Endothelial cell of umbilical vein (primary cell): ENCODE measurements at regions of chr5 and their contacts with region 1.

Region 1: GRCh38 chr5:171484460-171484899 is 65.0 kb downstream of the FGF18 start:
- DNase-seq: peak; percentile 33
- H3K4me3 ChIP-seq: no peak overlapping the region
- H3K27ac ChIP-seq: no peak overlapping the region
- H3K4me1 ChIP-seq: no peaks in the 10 kb centered on the region
- H3K27me3 ChIP-seq: peaks cover 0 to 2% of the 10 kb centered on the region in 2 experiments
- CTCF ChIP-seq: peak; percentile 71 to 83
- POLR2A ChIP-seq: no peak

Region 2: DNA sequence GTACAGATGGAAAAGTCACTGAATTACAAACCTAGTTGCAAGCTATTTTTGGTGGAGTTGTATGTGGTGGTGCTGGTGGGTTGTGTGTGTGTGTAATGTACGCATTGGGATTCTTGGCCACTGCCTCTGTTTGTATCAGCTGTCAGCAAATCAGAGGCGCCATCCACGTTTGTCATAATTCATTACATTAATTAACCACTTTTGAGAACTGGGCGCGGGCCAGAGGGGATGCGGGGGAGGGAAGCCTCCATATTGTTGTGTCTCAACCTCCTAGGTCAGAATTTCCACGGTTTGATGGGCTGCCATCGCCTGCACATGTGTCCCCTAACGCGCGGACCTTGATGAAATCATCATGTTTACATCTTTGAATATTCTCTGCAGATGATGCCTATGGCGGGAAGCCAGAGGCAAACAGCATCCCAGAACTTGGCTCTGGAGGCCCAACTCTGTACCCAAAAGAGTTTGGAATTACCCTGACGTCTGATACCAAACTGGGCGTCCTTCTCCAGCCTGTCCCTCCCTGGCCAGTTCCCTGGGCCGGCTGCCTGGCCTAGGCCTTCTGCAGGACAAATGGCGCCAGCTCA is 10.2 kb before region 1 on chr5:
- CTCF ChIA-PET with region 1: interaction called, 16 read pairs
- POLR2A ChIA-PET with region 1: no interaction called
- dilution Hi-C with region 1: no loop called
- intact Hi-C with region 1: no loop called
- DNase-seq: no peak
- H3K4me3 ChIP-seq: no peak overlapping the region
- H3K27ac ChIP-seq: no peak overlapping the region
- H3K4me1 ChIP-seq: no peaks in the 10 kb centered on the region
- H3K27me3 ChIP-seq: peaks cover 14 to 16% of the 10 kb centered on the region in 2 experiments
- CTCF ChIP-seq: no peak
- POLR2A ChIP-seq: no peak

Region 3: DNA sequence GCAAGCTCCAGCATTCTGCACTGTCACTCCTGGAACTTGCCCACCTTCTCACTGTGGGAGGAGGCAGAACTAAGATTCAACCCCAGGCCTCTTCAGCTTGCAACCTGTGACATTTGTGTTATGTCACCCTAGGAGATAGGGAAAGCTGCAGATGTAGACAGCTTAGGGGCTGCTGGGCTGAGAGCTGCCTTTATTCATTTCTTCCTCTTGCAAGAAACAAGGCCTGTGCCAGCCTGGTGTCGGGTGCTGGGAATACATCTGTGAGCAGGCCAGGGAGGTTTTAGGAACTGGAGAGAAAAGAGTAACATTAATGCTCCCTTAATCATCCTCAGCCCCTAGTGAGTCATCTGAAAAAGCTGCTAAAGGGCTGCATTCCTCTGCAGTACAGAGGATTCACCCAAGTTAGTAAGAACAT is 36.7 kb after region 1 on chr5:
- CTCF ChIA-PET with region 1: interaction called, 9 read pairs
- POLR2A ChIA-PET with region 1: no interaction called
- dilution Hi-C with region 1: no loop called
- intact Hi-C with region 1: loop called (anchors 1 kb)
- DNase-seq: peak; percentile 32
- H3K4me3 ChIP-seq: no peak overlapping the region
- H3K27ac ChIP-seq: no peak overlapping the region
- H3K4me1 ChIP-seq: peaks cover 13% of the 10 kb centered on the region
- H3K27me3 ChIP-seq: peaks cover 0 to 2% of the 10 kb centered on the region in 2 experiments
- CTCF ChIP-seq: no peak
- POLR2A ChIP-seq: no peak

Region 4: GRCh38 chr5:171606414-171607024 is 122.0 kb after region 1 on chr5:
- CTCF ChIA-PET with region 1: interaction called, 4 read pairs
- POLR2A ChIA-PET with region 1: no interaction called
- dilution Hi-C with region 1: no loop called
- intact Hi-C with region 1: loop called (anchors 1 kb)
- DNase-seq: no peak
- H3K4me3 ChIP-seq: no peak overlapping the region
- H3K27ac ChIP-seq: no peak overlapping the region
- H3K4me1 ChIP-seq: peaks cover under 1% of the 10 kb centered on the region
- H3K27me3 ChIP-seq: peaks cover 5 to 6% of the 10 kb centered on the region in 2 experiments
- CTCF ChIP-seq: peak; percentile 34 to 37
- POLR2A ChIP-seq: no peak

Region 5: DNA sequence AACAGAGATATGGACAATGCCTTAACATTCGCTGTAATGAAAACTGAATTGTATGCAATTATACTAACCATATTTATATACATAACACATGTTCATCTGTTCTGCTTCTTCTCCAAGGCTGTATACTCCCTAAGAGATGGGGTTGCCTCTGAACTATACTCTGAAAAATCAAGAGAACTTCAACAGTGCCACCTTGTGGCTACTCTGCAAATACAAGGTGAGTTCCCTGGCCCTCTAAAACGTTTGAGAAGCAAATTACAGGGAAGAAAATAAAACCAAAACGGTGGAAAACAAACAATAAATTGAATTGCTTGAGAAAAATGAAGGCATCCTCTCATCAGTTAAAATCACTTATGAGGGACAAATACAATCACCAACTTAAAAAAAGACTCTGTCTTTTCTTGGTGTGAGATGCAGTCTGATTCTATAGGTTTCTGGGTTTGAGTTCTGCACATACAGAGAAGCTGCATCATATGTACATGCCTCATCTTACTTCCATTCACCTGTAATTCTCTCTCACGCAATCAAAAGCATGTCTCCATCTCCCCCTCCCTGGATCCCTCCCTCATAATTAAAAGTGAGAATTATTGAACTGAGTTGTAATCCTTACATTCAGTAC is 423.4 kb after region 1 on chr5:
- CTCF ChIA-PET with region 1: interaction called, 15 read pairs
- POLR2A ChIA-PET with region 1: no interaction called
- dilution Hi-C with region 1: no loop called
- intact Hi-C with region 1: loop called (anchors 1 kb)
- DNase-seq: peak; percentile 65
- H3K4me3 ChIP-seq: no peak overlapping the region
- H3K27ac ChIP-seq: no peak overlapping the region
- H3K4me1 ChIP-seq: no peaks in the 10 kb centered on the region
- H3K27me3 ChIP-seq: no peaks in the 10 kb centered on the region
- CTCF ChIP-seq: peak; percentile 52 to 58
- POLR2A ChIP-seq: no peak